ENCODE measurements at regions of chr2 and their contacts with region 1.

Region 1: DNA sequence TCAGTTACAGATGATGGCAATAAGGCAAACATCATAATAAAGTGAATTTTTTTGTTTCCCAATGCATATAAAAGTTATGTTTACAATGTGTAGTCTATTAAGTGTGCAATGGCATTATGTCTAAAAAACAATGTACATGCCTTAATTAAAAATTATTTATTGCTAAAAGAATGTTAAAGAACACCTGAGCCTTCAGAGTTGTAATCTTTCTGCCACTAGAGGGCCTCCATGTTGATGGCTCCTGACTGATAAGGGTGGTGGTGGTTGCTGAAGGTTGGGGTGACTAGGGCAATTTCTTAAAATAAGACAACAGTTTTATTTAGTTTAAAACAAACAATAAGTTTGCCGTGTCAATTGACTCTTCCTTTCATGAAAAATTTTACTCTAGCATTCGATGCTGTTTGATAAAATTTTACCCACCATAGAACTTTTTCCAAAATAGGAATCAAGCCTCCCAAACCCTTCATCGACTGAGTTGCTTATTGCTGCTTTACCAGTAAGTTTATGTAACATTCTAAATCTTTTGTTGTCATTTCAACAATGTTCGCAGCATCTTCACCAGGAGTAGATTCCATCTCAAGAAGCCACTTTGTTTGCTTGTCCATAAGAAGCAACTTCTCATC is 32.3 kb downstream of the MAP3K2 start:
- DNase-seq: peak; percentile 27
- ATAC-seq: peak; percentile 79
- H3K4me3 ChIP-seq: no peak overlapping the region
- H3K27ac ChIP-seq: no peak overlapping the region
- H3K4me1 ChIP-seq: no peaks in the 10 kb centered on the region
- H3K27me3 ChIP-seq: no peaks in the 10 kb centered on the region
- CTCF ChIP-seq: peak; percentile 39 to 83 (median 74); a peak in 5 of 6 replicates
- POLR2A ChIP-seq: no peak
- RAD21 ChIP-seq: peak; percentile 51

Region 2: GRCh38 chr2:127415593-127416505 is 60.4 kb after region 1 on chr2:
- CTCF ChIA-PET with region 1: no interaction called
- POLR2A ChIA-PET with region 1: no interaction called
- RAD21 ChIA-PET with region 1: no interaction called
- intact Hi-C with region 1: loop called (anchors 5 kb)
- DNase-seq: peak; percentile 61
- ATAC-seq: peak; percentile 95
- H3K4me3 ChIP-seq: peak overlapping the region; percentile 34 to 53
- H3K27ac ChIP-seq: no peak overlapping the region
- H3K4me1 ChIP-seq: peaks cover 17 to 29% of the 10 kb centered on the region in 2 experiments
- H3K27me3 ChIP-seq: no peaks in the 10 kb centered on the region; the same call in 1 of the 2 replicates
- CTCF ChIP-seq: peak; percentile 75 to 79 (median 77)
- POLR2A ChIP-seq: no peak
- RAD21 ChIP-seq: peak; percentile 80

Region 3: GRCh38 chr2:127516031-127516762 is 160.7 kb after region 1 on chr2:
- CTCF ChIA-PET with region 1: no interaction called
- POLR2A ChIA-PET with region 1: no interaction called
- RAD21 ChIA-PET with region 1: no interaction called
- intact Hi-C with region 1: no loop called
- DNase-seq: no peak
- ATAC-seq: no peak
- H3K4me3 ChIP-seq: no peak overlapping the region
- H3K27ac ChIP-seq: no peak overlapping the region
- H3K4me1 ChIP-seq: no peaks in the 10 kb centered on the region
- H3K27me3 ChIP-seq: no peaks in the 10 kb centered on the region
- CTCF ChIP-seq: no peak
- POLR2A ChIP-seq: no peak
- RAD21 ChIP-seq: no peak

Measured in HCT116 (cell line).